ENCODE measurements at regions of chr10 and their contacts with region 1.

Region 1: DNA sequence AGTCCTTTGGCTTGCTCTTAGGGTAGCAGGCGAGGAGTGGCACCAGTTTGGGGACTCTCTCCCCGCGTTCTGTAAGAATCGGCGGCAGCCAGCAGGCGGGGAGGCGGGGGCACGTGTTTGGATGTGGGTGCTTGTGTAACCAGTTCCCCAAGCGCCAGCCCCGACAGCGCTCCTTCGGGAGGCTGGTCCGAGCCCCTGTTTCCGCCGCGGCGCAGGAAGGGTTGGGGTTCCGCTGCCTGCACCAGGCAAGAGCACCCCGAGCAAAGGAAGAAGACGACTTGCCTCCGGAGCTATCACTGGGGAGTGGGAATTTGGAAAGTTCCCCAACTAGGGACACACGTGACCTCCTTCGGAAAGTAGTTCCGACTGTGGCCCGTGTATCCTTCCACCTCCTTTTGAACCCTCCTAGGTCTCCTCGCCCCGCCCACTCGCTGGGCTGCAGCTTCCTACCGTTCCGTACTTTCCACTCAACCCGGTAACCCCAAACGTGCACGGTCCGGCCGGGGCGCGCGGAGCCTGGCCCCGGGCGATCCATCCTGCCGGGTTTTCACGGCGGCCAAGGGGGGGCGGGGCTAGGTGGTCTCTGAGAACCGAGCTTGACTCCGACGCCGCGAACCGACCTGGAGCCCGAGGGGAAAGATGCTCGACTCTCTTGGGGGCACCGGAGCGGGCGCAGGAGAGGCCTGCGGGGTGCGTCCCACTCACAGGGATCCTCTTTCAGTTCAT is 1.2 kb downstream of the KLLN start:
- DNase-seq: peak; percentile 91
- CTCF ChIP-seq: no peak

Region 2: DNA sequence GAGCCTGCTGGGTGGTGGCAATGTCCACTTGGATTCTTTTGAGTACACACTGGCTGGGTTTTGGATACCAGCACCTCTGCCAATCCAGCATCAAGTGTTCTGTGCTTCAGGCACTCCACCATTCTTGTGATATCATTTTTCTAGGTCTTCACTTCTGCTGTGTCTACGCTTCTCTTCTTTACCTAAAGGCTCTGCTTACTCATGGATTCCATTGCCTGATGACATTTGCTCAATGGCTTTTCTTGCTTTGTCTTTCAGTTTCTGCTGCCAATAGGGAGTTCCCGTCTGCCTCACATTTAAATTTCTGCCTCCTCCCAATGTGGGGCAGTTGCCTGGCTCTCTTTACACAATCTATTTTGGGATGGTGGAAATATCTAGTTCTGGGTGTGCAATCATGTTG is 215.2 kb before region 1 on chr10:
- in situ Hi-C with region 1: no loop called
- DNase-seq: no peak
- CTCF ChIP-seq: no peak

Region 3: DNA sequence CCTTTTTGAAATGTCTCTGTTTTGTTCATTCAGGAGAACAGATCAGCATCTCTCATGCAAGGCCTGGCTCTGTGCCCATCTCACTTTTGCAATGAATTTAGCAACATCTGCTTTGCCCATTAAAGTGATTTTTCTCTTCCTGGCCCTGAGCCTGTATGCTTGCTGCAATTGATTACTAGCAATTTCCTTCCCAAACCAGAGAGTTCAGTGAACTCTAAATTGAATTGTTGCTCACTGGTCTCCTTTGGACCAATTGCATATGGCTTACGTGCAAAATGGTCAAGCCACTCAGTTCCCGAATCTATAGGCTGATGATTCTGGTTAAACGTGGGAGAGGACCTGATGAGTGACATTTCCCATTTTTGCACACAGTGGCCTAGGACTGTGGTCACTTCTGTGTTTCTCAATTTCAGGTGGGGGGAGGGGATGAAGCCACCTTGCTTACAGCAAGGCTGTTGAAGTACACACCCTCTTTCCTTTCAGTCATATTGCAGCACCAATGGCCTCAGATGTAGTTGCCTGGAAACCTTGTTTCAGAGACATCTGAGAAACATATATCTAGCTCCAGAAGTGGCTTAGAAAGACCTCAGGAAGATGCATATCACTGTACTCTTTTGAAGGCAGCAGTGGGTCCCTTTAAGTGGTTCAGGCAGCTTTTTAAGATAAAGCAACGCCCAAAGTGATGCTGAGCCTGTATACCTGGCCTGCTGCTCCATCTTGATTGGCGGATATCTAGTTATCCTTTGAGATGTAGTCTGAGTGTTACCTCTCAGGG is 202.7 kb after region 1 on chr10:
- in situ Hi-C with region 1: loop called (anchors 10 kb)
- DNase-seq: peak; percentile 32
- CTCF ChIP-seq: no peak

Region 4: GRCh38 chr10:88091490-88092105 is 229.5 kb after region 1 on chr10:
- in situ Hi-C with region 1: loop called (anchors 10 kb)
- DNase-seq: peak; percentile 62
- CTCF ChIP-seq: no peak

Region 5: DNA sequence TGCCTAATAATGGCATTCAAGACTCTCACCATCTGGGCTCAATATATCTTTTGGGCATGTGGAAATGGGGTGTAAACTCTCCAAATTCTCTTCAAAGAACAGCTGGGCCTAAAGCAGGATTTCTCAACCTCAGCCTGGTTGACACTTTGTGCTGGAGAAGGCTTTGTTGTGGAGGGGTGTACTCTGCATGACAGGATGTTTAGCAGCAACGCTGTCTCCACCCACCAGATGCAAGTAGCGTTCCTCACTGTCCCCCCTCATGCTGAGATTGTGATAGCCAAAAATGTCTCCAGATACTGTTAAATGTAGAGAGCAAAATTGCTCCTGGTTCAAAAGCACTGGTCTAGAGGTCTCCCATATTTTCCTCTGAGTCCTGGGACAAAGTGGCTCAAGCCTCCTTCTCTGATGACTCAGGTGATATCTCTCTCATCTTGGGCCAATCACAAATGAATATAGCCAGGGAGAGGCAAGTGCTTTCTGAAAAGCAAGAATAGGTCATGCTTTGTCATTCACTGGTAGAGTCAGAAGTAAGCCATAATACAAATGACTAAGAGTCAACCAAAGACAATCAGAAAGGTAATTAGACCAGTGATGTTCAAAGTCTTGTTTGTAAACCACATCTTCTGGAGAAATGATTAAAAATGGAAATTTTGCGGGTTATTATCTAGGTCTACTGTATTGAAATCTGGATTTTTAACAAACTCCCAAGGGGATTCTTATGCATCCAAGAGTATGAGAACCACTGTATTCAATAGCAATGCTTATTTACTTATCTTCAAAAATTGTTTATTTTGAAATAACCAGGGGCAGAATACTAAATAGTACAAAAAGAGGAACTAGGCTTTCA is 332.1 kb after region 1 on chr10:
- in situ Hi-C with region 1: no loop called
- DNase-seq: no peak
- CTCF ChIP-seq: no peak

Region 6: GRCh38 chr10:88270871-88271713 is 409.0 kb after region 1 on chr10:
- in situ Hi-C with region 1: loop called (anchors 25 kb)
- DNase-seq: peak; percentile 44
- CTCF ChIP-seq: no peak

Region 7: DNA sequence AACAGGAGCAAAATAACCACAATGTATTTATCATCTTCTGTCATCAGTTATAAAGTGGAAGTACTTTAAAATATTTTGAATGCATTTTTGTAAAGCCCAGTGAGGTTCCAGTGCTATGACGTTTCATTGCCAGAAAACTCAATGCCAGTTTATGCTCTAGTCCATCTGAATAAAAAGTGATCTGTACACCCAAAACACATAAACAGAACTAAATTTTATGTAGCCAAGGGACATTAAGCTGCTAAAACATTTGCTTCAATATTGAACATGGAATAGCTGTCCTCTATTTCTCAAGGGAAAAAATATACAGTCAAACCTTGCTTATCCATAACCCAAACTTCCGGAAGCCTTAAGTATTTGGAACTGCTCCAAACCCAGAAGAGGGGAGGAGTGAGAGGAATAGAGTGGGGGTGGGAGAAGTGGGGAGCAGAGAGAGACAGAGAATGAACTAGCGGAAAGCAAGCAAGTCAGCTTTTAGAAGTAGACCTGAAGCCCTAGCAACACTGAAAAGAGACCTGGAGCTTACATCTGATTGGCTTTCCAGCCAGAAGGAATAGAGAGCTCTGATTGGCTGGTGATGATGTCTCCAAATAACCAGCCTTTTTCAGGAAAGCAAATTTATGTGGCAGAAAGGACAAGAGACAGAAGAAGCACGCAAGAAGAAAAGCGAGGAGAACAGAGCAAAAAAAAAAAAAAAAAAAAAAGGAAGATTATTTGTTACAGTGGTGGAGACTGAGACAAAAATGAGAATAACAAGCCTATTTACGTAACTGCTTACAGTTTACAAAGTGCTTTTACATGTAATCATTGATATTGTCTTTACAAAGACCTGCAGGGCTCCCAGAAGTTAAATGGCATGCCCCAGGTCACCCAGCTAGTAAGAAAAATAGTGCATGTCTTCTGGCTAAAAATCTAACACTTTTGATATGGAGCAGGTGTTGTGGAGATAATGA is 525.0 kb after region 1 on chr10:
- in situ Hi-C with region 1: loop called (anchors 5 kb)
- DNase-seq: peak; percentile 46
- CTCF ChIP-seq: no peak

Measured in GM13976 (cell line).